MCF 10A (cell line): ENCODE measurements at regions of chr3 and their contacts with region 1.

Region 1: DNA sequence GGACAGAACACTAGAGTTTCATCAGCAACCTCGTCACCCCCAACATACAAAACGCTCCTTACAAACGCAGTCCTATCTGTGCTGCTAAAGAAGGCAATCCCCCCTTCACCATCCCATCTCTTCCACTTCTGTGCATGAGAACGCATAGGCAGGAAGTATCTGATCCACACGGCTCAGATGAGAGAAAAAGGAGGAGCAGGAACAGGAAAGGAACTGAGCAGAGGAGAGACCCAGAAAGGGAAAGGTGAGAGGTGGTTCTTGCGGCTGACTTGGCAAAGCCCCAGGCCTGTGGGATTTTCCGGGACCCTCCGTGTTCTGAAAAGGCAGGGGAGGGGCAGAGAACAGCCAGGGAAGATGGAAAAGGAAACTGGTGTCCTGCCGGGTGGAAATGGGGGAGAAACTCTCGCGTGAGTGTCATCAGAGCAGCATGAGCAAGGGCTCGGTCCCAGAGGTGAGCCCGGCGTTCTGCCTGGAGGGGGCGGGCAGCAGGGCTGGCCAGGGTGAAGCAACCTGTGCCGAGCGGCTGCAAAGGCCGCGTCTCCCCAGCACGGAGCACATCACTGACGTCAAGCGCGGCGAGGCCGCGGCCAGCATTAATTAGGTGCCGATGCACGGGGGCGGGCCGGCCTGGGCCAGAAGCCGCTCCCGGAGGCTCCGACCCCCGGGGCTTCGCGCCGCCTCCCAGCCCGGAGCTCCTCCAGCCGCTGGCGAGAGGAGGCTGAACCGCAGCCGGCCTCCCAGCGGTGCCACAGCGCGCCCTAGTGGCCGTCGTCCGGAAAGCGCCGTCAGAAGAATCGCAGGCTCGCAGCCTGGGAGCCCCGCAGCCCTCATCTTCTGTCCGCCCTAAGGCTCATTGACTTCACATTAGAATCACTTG is 35.8 kb downstream of the CPN2 start:
- DNase-seq: peak; percentile 95
- H3K4me3 Mint-ChIP-seq: peak overlapping the region; percentile 82
- H3K27ac Mint-ChIP-seq: peak overlapping the region; percentile 84
- H3K4me1 Mint-ChIP-seq: peaks cover 6% of the 10 kb centered on the region
- H3K27me3 Mint-ChIP-seq: no peaks in the 10 kb centered on the region
- CTCF ChIP-seq: peak; percentile 92

Region 2: GRCh38 chr3:193665370-193665989 is 649.8 kb before region 1 on chr3:
- CTCF ChIA-PET with region 1: interaction called, 47 read pairs
- POLR2A ChIA-PET with region 1: interaction called, 3 read pairs
- intact Hi-C with region 1: loop called (anchors 5 kb)
- DNase-seq: peak; percentile 40
- H3K4me3 Mint-ChIP-seq: no peak overlapping the region
- H3K27ac Mint-ChIP-seq: no peak overlapping the region
- H3K4me1 Mint-ChIP-seq: no peaks in the 10 kb centered on the region
- H3K27me3 Mint-ChIP-seq: no peaks in the 10 kb centered on the region
- CTCF ChIP-seq: peak; percentile 36

Region 3: DNA sequence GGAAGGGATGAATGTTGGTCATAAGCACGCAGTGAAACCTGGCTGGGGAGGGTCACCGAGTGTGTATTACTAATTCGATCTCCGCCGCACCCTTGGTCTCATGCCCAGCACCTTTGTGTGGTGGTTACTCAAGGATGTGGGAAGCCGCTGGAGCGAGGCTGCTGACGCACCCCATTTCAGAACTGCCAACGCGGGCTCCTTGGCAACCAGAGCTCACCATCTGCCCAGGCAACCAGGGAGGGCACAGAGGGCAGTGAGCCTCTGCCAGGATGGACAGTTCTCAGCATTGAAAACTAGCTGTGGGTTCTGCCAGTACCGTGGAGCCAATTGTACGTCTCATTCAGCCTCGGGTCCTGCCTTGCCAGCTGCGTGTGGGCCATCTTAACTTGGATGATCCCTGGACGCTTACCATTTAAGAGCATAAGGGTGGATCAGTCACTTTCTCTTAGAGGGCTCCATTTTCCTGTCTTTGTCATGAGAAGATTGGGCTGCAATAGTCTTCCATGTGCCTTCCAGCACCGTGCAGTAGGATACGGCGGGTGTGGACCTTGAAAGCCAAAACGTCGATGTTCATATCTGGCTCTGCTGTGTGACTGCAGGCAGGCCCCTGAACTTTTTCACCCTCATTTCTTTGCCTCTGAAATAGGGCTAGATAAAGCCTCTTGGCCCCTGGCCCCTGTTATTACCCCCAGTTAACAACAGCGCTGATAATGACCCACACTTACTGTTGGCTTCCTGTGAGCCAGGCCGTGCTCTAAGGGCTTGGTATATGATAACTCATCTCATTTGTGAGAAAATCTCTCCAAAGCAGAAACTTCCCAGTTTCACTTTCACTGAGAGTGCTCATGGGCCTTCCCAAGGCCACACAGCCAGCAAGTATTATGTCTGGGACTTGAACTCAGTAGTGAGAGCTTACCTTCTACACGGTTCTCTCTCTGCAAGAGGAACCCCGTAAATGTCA is 483.6 kb before region 1 on chr3:
- CTCF ChIA-PET with region 1: interaction called, 5 read pairs
- POLR2A ChIA-PET with region 1: interaction called, 12 read pairs
- intact Hi-C with region 1: loop called (anchors 2 kb)
- DNase-seq: peak; percentile 100
- H3K4me3 Mint-ChIP-seq: peak overlapping the region; percentile 61
- H3K27ac Mint-ChIP-seq: peak overlapping the region; percentile 100
- H3K4me1 Mint-ChIP-seq: peaks cover 56% of the 10 kb centered on the region
- H3K27me3 Mint-ChIP-seq: no peaks in the 10 kb centered on the region
- CTCF ChIP-seq: no peak

Region 4: GRCh38 chr3:194003125-194004057 is 311.9 kb before region 1 on chr3:
- CTCF ChIA-PET with region 1: no interaction called
- POLR2A ChIA-PET with region 1: no interaction called
- intact Hi-C with region 1: loop called (anchors 5 kb)
- DNase-seq: peak; percentile 96
- H3K4me3 Mint-ChIP-seq: peak overlapping the region; percentile 67
- H3K27ac Mint-ChIP-seq: peak overlapping the region; percentile 69
- H3K4me1 Mint-ChIP-seq: peaks cover 22% of the 10 kb centered on the region
- H3K27me3 Mint-ChIP-seq: no peaks in the 10 kb centered on the region
- CTCF ChIP-seq: no peak

Region 5: DNA sequence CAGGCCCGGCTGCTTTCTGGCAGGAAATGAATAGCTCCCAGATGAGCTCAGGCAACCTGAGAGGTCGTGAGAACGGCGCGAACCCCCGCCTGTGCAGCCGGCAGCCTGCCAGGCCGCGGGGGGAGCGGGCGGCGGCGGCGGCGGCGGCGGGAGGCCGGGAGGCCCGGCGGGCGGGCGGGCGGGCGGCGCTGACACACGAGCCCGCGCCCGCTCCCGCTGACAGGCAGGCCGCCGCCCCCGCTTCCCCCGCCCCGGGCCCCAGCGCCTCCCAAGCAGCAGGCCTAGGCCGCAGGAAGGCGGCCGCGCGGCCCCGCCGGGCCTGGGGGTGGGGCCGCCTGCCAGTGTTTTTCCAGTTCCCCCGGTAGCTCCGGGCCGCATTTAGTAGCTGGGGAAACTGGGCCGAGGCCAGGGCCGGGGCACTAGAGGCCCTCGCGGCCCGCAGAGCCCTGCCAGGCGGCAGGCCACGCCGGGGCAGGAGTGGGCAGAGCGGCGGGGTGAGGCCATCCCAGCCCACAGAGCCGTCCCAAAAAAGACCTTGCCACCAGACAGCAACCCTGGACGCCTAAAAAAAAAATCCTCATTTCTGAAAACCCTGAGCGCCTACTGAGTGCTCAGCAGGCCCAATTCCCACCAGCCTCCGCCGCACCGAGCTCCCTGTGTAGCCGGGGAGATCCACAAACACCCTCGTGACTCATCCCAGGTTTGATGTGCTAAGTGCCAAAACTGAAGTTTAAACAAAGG is 173.7 kb before region 1 on chr3:
- CTCF ChIA-PET with region 1: interaction called, 45 read pairs
- POLR2A ChIA-PET with region 1: interaction called, 193 read pairs
- intact Hi-C with region 1: loop called (anchors 1 kb)
- DNase-seq: peak; percentile 97
- H3K4me3 Mint-ChIP-seq: peak overlapping the region; percentile 59
- H3K27ac Mint-ChIP-seq: peak overlapping the region; percentile 94
- H3K4me1 Mint-ChIP-seq: peaks cover 26% of the 10 kb centered on the region
- H3K27me3 Mint-ChIP-seq: no peaks in the 10 kb centered on the region
- CTCF ChIP-seq: no peak

Region 6: GRCh38 chr3:194333212-194333980 is 18.1 kb after region 1 on chr3:
- CTCF ChIA-PET with region 1: interaction called, 8 read pairs
- POLR2A ChIA-PET with region 1: interaction called, 18 read pairs
- intact Hi-C with region 1: no loop called
- DNase-seq: peak; percentile 97
- H3K4me3 Mint-ChIP-seq: peak overlapping the region; percentile 77
- H3K27ac Mint-ChIP-seq: peak overlapping the region; percentile 90
- H3K4me1 Mint-ChIP-seq: peaks cover 28% of the 10 kb centered on the region
- H3K27me3 Mint-ChIP-seq: no peaks in the 10 kb centered on the region
- CTCF ChIP-seq: peak; percentile 97